ENCODE measurements at regions of chr17 and their contacts with region 1.

Region 1: DNA sequence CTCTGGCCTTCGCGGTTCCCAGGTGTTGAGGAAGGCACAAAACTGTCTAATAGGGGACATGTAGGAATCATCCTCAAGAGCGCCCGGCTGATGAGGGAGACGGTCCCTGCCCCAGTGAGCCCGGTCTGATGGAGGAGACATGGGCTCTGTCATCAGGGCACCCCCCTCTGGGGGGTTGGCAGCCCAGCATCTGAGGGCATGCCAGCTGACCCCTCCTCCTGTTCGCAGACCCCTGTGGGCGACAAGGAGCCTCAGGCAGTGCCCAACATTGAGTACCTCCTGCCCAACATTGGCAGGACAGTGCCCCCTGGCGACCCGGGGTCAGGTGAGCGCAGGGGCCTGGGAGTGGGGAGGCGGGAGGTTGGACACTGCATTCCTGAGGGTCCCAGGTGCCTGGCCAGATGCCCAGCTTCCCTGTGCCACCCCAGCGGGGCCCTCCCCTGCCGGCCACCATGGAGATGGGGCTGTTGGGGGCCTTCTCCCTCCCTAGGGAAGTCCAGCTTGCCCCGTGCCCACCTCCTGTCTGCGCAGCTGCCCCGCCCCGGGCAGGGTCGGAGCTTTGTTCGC is 70.0 kb downstream of the ARHGAP23 start:
- DNase-seq: no peak
- H3K4me3 Mint-ChIP-seq: no peak overlapping the region
- H3K27ac Mint-ChIP-seq: no peak overlapping the region
- H3K4me1 Mint-ChIP-seq: no peaks in the 10 kb centered on the region
- H3K27me3 Mint-ChIP-seq: no peaks in the 10 kb centered on the region

Region 2: GRCh38 chr17:38421171-38421841 is 77.0 kb before region 1 on chr17:
- CTCF ChIA-PET with region 1: interaction called, 3 read pairs
- intact Hi-C with region 1: loop called (anchors 2 kb)
- DNase-seq: no peak
- H3K4me3 Mint-ChIP-seq: no peak overlapping the region
- H3K27ac Mint-ChIP-seq: no peak overlapping the region
- H3K4me1 Mint-ChIP-seq: peaks cover 5% of the 10 kb centered on the region
- H3K27me3 Mint-ChIP-seq: peaks cover 56% of the 10 kb centered on the region

Region 3: GRCh38 chr17:38777641-38778250 is 279.5 kb after region 1 on chr17:
- CTCF ChIA-PET with region 1: no interaction called
- intact Hi-C with region 1: no loop called
- DNase-seq: no peak
- H3K4me3 Mint-ChIP-seq: no peak overlapping the region
- H3K27ac Mint-ChIP-seq: no peak overlapping the region
- H3K4me1 Mint-ChIP-seq: no peaks in the 10 kb centered on the region
- H3K27me3 Mint-ChIP-seq: no peaks in the 10 kb centered on the region

Measured in activated naive CD4-positive, alpha-beta T cell treated with anti-CD3 and anti-CD28 coated beads for 36 hours (primary cell).